ENCODE measurements at regions of chr16 and their contacts with region 1.

Region 1: GRCh38 chr16:83356266-83356665 is 451.5 kb upstream of the HSBP1 start:
- DNase-seq: no peak
- ATAC-seq: peak in 5 of 8 donors; percentile 51 to 72 (median 64)
- H3K4me3 ChIP-seq: no peak overlapping the region
- H3K27ac ChIP-seq: no peak overlapping the region
- H3K4me1 ChIP-seq: peaks cover 0 to 8% (median 0%) of the 10 kb centered on the region in 9 donors
- H3K27me3 ChIP-seq: no peaks in the 10 kb centered on the region
- CTCF ChIP-seq: peak; percentile 26 to 69 (median 57)

Region 2: GRCh38 chr16:82317411-82318167 is 1038.7 kb before region 1 on chr16:
- intact Hi-C with region 1: no loop called
- DNase-seq: no peak
- ATAC-seq: peak in 7 of 8 donors; percentile 42 to 76 (median 70)
- H3K4me3 ChIP-seq: no peak overlapping the region
- H3K27ac ChIP-seq: peak overlapping the region in 7 of 10 donors; percentile 4 to 55 (median 38)
- H3K4me1 ChIP-seq: peaks cover 0 to 33% (median 0%) of the 10 kb centered on the region in 9 donors
- H3K27me3 ChIP-seq: no peaks in the 10 kb centered on the region
- CTCF ChIP-seq: no peak

Region 3: DNA sequence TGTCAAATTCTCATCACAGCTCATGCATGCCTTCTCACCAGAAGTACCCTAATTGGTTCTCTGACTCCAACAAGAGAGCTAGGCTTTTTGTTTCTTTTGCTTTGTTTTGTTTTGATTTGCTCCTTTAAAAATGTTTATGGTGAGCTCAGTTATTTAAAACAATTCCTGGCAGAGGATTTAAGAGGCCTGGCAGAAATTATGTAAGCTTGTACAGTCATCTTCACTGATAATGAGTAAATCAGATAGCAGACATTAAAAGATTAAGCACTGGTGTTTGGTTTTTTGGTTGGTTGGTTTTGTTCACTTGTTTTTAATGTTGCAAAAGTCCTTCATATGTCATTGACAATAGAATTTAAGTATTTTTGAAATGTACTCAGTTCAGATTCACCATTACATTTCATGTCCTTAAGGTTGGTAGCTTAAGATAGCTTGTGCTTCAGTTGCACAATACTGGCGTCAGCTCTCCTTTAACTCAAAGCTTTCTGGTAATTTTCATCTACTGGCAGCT is 350.6 kb before region 1 on chr16:
- intact Hi-C with region 1: no loop called
- DNase-seq: no peak
- ATAC-seq: no peak
- H3K4me3 ChIP-seq: no peak overlapping the region
- H3K27ac ChIP-seq: no peak overlapping the region
- H3K4me1 ChIP-seq: peaks cover 0 to 17% (median 6%) of the 10 kb centered on the region in 9 donors
- H3K27me3 ChIP-seq: no peaks in the 10 kb centered on the region
- CTCF ChIP-seq: no peak

Region 4: GRCh38 chr16:83200005-83200779 is 156.1 kb before region 1 on chr16:
- intact Hi-C with region 1: loop called in 3 of 10 experiments (anchors 5 to 10 kb)
- DNase-seq: peak; percentile 5 to 11
- ATAC-seq: peak in 6 of 8 donors; percentile 55 to 70 (median 66)
- H3K4me3 ChIP-seq: no peak overlapping the region
- H3K27ac ChIP-seq: no peak overlapping the region
- H3K4me1 ChIP-seq: no peaks in the 10 kb centered on the region
- H3K27me3 ChIP-seq: no peaks in the 10 kb centered on the region
- CTCF ChIP-seq: peak in 8 of 9 donors; percentile 4 to 46 (median 34)

Region 5: GRCh38 chr16:83245061-83245460 is 111.2 kb before region 1 on chr16:
- intact Hi-C with region 1: loop called in 2 of 10 experiments (anchors 2 to 10 kb)
- DNase-seq: no peak
- ATAC-seq: no peak
- H3K4me3 ChIP-seq: no peak overlapping the region
- H3K27ac ChIP-seq: no peak overlapping the region
- H3K4me1 ChIP-seq: peaks cover 0 to 23% (median 10%) of the 10 kb centered on the region in 9 donors
- H3K27me3 ChIP-seq: no peaks in the 10 kb centered on the region
- CTCF ChIP-seq: no peak

Region 6: GRCh38 chr16:83253521-83253920 is 102.7 kb before region 1 on chr16:
- intact Hi-C with region 1: loop called in 3 of 10 experiments (anchors 2 to 10 kb)
- DNase-seq: no peak
- ATAC-seq: no peak
- H3K4me3 ChIP-seq: no peak overlapping the region
- H3K27ac ChIP-seq: no peak overlapping the region
- H3K4me1 ChIP-seq: peaks cover 0 to 22% (median 13%) of the 10 kb centered on the region in 9 donors
- H3K27me3 ChIP-seq: no peaks in the 10 kb centered on the region
- CTCF ChIP-seq: no peak

Region 7: GRCh38 chr16:83393196-83393981 is 37.1 kb after region 1 on chr16:
- intact Hi-C with region 1: no loop called
- DNase-seq: peak in 1 of 2 donors; percentile 4
- ATAC-seq: peak in 6 of 8 donors; percentile 25 to 61 (median 48)
- H3K4me3 ChIP-seq: no peak overlapping the region
- H3K27ac ChIP-seq: peak overlapping the region in 3 of 10 donors; percentile 22 to 44 (median 30)
- H3K4me1 ChIP-seq: peaks cover 0 to 13% (median 9%) of the 10 kb centered on the region in 9 donors
- H3K27me3 ChIP-seq: no peaks in the 10 kb centered on the region
- CTCF ChIP-seq: no peak